GM12878 (cell line): ENCODE measurements at regions of chr13 and their contacts with region 1.

Region 1: DNA sequence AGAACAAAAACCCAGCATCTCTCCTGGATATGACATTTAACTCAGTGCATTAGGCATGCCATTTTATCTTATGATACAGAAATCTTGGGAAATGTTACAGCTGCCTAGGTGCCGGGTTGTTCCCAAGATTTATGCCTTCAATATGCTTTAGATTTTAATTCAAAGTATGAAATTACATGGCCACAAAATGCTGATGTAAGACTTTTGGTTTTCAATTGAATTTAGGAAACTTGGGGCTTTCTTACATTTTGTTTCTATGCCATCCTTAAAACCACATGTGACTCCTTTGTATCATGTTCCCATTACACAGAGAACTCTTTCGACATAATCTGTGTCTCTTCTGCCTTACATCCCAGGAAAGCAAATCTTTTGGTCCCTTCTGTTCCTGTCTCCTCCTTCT is 83.9 kb downstream of the CCNA1 start:
- DNase-seq: no peak
- ATAC-seq: no peak
- H3K4me3 ChIP-seq: no peak overlapping the region
- H3K27ac ChIP-seq: no peak overlapping the region
- H3K4me1 ChIP-seq: no peaks in the 10 kb centered on the region
- H3K27me3 ChIP-seq: no peaks in the 10 kb centered on the region
- CTCF ChIP-seq: no peak
- EP300 ChIP-seq: no peak
- POLR2A ChIP-seq: no peak
- RAD21 ChIP-seq: no peak

Region 2: GRCh38 chr13:36475468-36475867 is 40.8 kb before region 1 on chr13:
- CTCF ChIA-PET with region 1: no interaction called
- POLR2A ChIA-PET with region 1: no interaction called
- RAD21 ChIA-PET with region 1: no interaction called
- SMC1A ChIA-PET with region 1: no interaction called
- in situ Hi-C with region 1: no loop called
- intact Hi-C with region 1: loop called (anchors 2 kb)
- DNase-seq: no peak
- ATAC-seq: 0 out of 3 replicates have a peak, but pooled peaks have one; percentile 35
- H3K4me3 ChIP-seq: no peak overlapping the region
- H3K27ac ChIP-seq: no peak overlapping the region
- H3K4me1 ChIP-seq: no peaks in the 10 kb centered on the region
- H3K27me3 ChIP-seq: no peaks in the 10 kb centered on the region
- CTCF ChIP-seq: peak in 1 of 3 experiments; percentile 42; a peak in 2 of 6 replicates
- EP300 ChIP-seq: no peak
- POLR2A ChIP-seq: no peak
- RAD21 ChIP-seq: peak; percentile 38; the same call in 1 of the 2 replicates